PC-3 (cell line): ENCODE measurements at regions of chr21 and their contacts with region 1.

Region 1: GRCh38 chr21:15483138-15483780 is 246.5 kb upstream of the USP25 start:
- DNase-seq: peak; percentile 95
- ATAC-seq: peak; percentile 100
- H3K4me3 ChIP-seq: no peak overlapping the region
- H3K27ac ChIP-seq: no peak overlapping the region
- H3K4me1 ChIP-seq: peaks cover 16% of the 10 kb centered on the region
- H3K27me3 ChIP-seq: no peaks in the 10 kb centered on the region
- CTCF ChIP-seq: peak; percentile 96

Region 2: DNA sequence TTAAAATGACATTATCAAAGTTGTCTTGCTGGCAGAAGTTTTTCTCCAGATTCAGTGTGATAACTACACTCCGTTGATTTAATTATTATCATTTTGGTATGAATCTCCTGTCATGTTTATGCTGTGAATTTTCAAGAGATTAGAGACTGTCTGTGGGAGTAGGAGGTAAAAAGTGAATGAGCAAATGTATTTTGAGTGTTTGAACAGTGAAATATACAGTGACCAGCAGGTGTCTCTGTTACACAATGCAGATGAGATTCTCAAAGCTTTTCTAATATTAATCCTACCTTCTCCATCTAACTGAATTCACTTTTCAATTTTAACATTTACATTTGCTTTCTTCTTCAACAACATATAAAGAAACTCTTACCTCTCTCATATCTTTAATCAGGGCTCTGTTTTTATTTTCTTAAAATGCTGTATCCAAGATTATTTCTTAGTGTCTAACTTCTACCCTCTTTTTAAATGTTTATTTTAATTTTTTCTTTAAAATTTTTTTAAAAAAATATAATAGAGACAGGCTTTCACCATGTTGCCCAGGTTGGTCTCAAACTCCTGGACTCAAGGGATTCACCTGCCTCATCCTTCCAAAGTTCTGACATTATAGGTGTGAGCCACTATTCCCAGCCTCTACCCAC is 1079.5 kb before region 1 on chr21:
- CTCF ChIA-PET with region 1: no interaction called
- POLR2A ChIA-PET with region 1: no interaction called
- intact Hi-C with region 1: loop called (anchors 10 kb)
- DNase-seq: peak; percentile 65
- ATAC-seq: peak; percentile 80
- H3K4me3 ChIP-seq: no peak overlapping the region
- H3K27ac ChIP-seq: no peak overlapping the region
- H3K4me1 ChIP-seq: no peaks in the 10 kb centered on the region
- H3K27me3 ChIP-seq: no peaks in the 10 kb centered on the region
- CTCF ChIP-seq: peak; percentile 86

Region 3: GRCh38 chr21:14877570-14878228 is 605.6 kb before region 1 on chr21:
- CTCF ChIA-PET with region 1: interaction called, 4 read pairs
- POLR2A ChIA-PET with region 1: no interaction called
- intact Hi-C with region 1: loop called (anchors 5 kb)
- DNase-seq: peak; percentile 97
- ATAC-seq: peak; percentile 62
- H3K4me3 ChIP-seq: peak overlapping the region; percentile 35
- H3K27ac ChIP-seq: peak overlapping the region; percentile 94
- H3K4me1 ChIP-seq: peaks cover 88% of the 10 kb centered on the region
- H3K27me3 ChIP-seq: no peaks in the 10 kb centered on the region
- CTCF ChIP-seq: no peak

Region 4: DNA sequence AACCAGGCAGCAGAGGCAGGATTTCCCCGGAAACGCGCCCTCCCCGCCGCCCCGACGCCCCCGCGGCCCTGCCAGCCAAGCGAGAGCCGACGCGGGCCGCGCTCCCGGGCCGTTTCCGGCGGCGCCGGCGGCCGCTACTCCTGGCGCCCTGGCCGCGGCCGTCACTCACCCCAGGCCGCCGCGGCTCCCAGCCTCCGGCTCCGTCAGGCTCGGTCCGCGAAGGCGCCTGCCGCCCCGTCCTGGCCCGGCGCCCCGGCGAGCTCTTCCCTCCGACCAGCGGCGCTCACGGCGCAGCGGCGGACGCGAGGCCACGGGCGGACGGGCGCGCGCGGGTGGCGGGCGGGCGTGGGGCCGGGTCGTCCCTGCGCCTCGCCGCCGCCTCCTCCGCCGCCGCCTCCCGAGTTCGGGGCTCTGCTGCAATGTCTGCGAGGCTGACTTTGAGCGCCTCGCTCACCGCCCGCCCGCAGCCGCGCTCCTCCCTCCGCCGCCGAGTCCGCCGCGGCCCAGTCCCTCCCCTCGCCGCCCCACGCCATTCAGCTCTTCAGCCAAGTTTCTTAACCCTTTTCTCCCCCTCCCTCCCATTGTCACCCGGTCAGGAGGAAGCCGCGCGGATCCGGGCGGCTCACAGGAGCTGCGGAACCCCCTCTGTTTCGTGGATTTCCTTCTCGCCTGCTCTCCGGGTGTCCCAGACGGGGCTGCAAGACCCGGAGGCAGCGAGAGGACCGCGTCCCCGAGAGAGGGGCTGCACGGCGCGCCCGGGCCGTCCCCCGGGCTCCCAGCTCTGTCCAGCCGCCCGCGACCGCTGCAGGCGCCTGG is 418.5 kb before region 1 on chr21 and contains the start of gene NRIP1:
- CTCF ChIA-PET with region 1: interaction called, 6 read pairs
- POLR2A ChIA-PET with region 1: no interaction called
- intact Hi-C with region 1: loop called (anchors 1 kb)
- DNase-seq: peak; percentile 89
- ATAC-seq: peak; percentile 64
- H3K4me3 ChIP-seq: peak within 1 kb of the TSS; percentile 85
- H3K27ac ChIP-seq: peak within 1 kb of the TSS; percentile 72
- H3K4me1 ChIP-seq: peaks cover 27% of the 10 kb centered on the region
- H3K27me3 ChIP-seq: no peaks in the 10 kb centered on the region
- CTCF ChIP-seq: no peak
- total RNA-seq, gene NRIP1: 68.0 and 69.2 TPM in 2 replicates

Region 5: GRCh38 chr21:15241997-15242736 is 241.1 kb before region 1 on chr21:
- CTCF ChIA-PET with region 1: no interaction called
- POLR2A ChIA-PET with region 1: no interaction called
- intact Hi-C with region 1: loop called (anchors 1 kb)
- DNase-seq: peak; percentile 60
- ATAC-seq: peak; percentile 32
- H3K4me3 ChIP-seq: no peak overlapping the region
- H3K27ac ChIP-seq: peak overlapping the region; percentile 47; the same call in 1 of the 2 replicates
- H3K4me1 ChIP-seq: peaks cover 28% of the 10 kb centered on the region
- H3K27me3 ChIP-seq: no peaks in the 10 kb centered on the region
- CTCF ChIP-seq: peak; percentile 55; the same call in 1 of the 2 replicates

Region 6: DNA sequence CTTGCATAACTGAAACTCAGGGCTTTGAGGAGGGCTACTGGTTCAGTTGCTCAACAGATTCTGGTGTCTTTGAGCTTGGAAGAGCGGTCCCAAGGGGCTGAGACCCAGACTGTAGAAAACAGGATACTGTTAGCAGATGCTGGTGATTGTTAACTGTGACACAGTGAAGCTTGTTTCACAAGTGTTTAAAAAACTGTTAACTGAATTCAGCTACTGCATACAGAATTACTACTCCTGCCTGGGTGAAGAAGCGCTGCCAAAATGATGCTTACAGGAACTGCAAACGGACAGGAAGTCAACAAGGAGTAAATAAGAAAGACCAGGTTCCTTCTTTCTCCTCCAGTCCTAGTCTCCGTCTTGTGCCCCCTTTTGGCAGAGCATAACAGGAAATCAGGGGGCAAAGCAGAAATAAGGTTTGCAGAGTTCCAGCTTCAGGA is 51.2 kb after region 1 on chr21:
- CTCF ChIA-PET with region 1: no interaction called
- POLR2A ChIA-PET with region 1: no interaction called
- intact Hi-C with region 1: no loop called
- DNase-seq: no peak
- ATAC-seq: no peak
- H3K4me3 ChIP-seq: no peak overlapping the region
- H3K27ac ChIP-seq: no peak overlapping the region
- H3K4me1 ChIP-seq: no peaks in the 10 kb centered on the region
- H3K27me3 ChIP-seq: no peaks in the 10 kb centered on the region
- CTCF ChIP-seq: peak; percentile 10; the same call in 1 of the 2 replicates

Region 7: DNA sequence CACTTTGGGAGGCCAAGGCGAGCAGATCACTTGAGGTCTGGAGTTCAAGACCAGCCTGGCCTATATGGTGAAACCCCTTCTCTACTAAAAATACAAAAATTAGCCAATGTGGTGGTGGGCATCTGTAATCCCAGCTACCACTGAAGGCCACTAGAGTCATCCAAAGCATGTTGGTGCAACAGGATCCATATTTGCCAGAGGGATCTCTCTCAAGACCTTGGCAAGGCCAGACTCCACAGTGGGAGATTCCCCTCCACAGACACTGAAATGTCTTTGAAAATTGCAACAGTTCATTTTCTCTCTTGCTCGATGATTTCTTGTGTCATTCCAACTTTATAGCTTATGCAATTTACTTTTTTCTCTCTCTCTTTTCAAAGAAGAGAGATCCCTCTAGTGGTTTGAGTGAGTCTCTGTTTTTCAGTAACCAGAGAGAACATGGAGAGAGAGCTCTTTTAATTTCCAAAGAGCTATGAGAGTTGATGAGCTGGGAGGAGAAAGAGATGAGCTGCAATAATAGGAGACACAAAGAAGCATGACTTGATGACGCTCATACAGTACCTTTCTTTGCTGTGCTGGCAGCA is 69.7 kb after region 1 on chr21:
- CTCF ChIA-PET with region 1: interaction called, 3 read pairs
- POLR2A ChIA-PET with region 1: no interaction called
- intact Hi-C with region 1: loop called (anchors 5 kb)
- DNase-seq: peak; percentile 61
- ATAC-seq: peak; percentile 72
- H3K4me3 ChIP-seq: no peak overlapping the region
- H3K27ac ChIP-seq: no peak overlapping the region
- H3K4me1 ChIP-seq: no peaks in the 10 kb centered on the region
- H3K27me3 ChIP-seq: no peaks in the 10 kb centered on the region
- CTCF ChIP-seq: peak; percentile 91